Dendritic cell treated with granulocyte-macrophage colony-stimulating factor and Interleukin-4, amounts not matched to agents 40 ng/mL and 50 ng/mL, for 4 days (primary cell): ENCODE measurements at regions of chr2 and their contacts with region 1.

Region 1: GRCh38 chr2:44955593-44956392 is 14.3 kb downstream of the SIX3 start:
- H3K4me3 Mint-ChIP-seq: no peak overlapping the region
- H3K27ac Mint-ChIP-seq: no peak overlapping the region
- H3K4me1 Mint-ChIP-seq: peaks cover 15% of the 10 kb centered on the region
- H3K27me3 Mint-ChIP-seq: peaks cover 78% of the 10 kb centered on the region

Region 2: DNA sequence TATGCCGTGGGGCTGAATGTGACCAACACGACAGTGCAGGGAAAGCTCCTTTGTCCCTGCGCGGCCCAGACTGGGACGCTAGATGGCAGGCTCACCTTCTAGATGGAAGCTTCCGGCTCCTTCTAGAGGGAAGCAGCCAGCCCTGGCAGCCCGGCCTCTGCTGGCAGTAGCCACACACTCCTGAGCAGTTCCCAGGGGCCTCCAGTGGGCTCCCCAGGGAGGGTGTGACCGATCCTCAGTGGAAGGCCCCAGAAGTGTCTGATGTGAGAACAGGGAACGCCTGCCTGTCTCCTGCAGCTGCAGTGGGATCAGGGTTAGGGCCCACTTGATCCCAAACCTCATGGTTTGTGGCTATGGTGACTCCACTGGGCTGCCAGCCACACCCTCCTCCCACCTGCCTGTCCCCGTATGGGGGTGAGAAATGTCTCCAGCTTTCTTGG is 911.5 kb before region 1 on chr2:
- intact Hi-C with region 1: loop called (anchors 10 kb)
- H3K4me3 Mint-ChIP-seq: no peak overlapping the region
- H3K27ac Mint-ChIP-seq: no peak overlapping the region
- H3K4me1 Mint-ChIP-seq: no peaks in the 10 kb centered on the region
- H3K27me3 Mint-ChIP-seq: peaks cover 2% of the 10 kb centered on the region

Region 3: GRCh38 chr2:44244129-44244871 is 711.5 kb before region 1 on chr2:
- intact Hi-C with region 1: loop called (anchors 5 kb)
- H3K4me3 Mint-ChIP-seq: no peak overlapping the region
- H3K27ac Mint-ChIP-seq: no peak overlapping the region
- H3K4me1 Mint-ChIP-seq: peaks cover 7% of the 10 kb centered on the region
- H3K27me3 Mint-ChIP-seq: no peaks in the 10 kb centered on the region

Region 4: GRCh38 chr2:44291281-44292248 is 664.2 kb before region 1 on chr2:
- intact Hi-C with region 1: no loop called
- H3K4me3 Mint-ChIP-seq: no peak overlapping the region
- H3K27ac Mint-ChIP-seq: no peak overlapping the region
- H3K4me1 Mint-ChIP-seq: peaks cover 6% of the 10 kb centered on the region
- H3K27me3 Mint-ChIP-seq: peaks cover 8% of the 10 kb centered on the region

Region 5: DNA sequence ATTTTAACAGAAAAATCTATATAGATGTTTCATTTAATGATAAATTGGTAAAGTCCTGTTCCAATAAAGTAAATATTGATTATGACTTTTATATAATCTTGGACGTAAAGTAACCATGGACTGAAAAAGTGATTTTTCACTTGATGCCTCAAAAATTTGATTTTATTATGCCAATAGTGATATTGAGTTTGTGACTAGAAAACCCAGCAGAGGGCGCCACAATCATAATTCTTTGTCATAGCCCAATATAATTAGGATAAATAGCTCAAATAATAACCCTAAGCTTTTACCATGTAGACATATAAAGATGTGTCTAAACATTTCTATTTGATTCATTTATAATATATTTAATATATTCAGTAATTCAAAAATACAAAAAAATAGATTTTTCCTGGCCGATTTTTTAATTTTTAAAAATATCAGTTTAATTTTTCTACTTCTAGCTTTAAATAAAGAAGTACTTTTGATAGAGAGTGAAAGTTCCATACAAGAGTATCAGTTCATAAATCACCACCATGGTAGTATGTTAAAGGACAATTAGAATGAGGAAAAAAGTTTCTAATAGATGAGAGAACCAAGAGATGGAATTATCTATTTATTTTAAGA is 563.4 kb before region 1 on chr2:
- intact Hi-C with region 1: loop called (anchors 1 kb)
- H3K4me3 Mint-ChIP-seq: no peak overlapping the region
- H3K27ac Mint-ChIP-seq: no peak overlapping the region
- H3K4me1 Mint-ChIP-seq: peaks cover 6% of the 10 kb centered on the region
- H3K27me3 Mint-ChIP-seq: no peaks in the 10 kb centered on the region

Region 6: DNA sequence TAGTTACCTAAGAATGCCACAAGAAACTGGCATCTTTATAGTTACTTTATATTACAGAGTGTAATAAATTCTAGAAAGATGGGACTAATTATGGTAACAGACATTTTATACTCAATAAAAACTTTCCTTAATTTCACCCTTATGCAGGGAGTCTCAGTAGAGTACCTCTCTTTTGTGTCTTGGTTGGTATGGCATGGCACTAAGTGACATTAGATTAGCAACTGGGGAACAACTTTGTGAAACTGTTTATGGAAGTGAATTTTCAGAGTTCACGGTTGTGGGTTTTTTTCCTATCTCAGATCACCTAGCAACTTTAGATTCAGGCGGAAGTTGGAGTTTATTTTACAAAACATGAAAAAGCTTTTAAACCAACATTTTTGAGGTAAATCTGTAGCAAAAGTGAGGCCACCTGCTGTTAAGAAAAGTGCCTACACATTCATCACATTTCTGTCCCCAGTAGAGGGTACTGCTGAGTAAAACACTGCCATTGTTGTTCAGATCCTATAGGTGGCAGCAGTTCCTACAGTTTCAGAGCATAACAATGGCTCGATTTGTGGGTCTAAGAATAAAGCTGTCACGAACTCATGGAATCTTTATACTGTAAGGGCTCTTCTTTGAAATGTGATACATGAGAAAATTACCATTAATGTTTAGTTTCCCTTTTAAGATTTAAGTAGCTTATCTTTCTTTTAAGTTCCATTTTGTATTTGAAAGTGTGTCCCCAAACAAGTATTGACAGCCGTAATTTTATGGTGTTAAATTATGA is 476.5 kb before region 1 on chr2:
- intact Hi-C with region 1: loop called (anchors 1 kb)
- H3K4me3 Mint-ChIP-seq: no peak overlapping the region
- H3K27ac Mint-ChIP-seq: no peak overlapping the region
- H3K4me1 Mint-ChIP-seq: no peaks in the 10 kb centered on the region
- H3K27me3 Mint-ChIP-seq: no peaks in the 10 kb centered on the region

Region 7: GRCh38 chr2:44559108-44559507 is 396.7 kb before region 1 on chr2:
- intact Hi-C with region 1: loop called (anchors 5 kb)
- H3K4me3 Mint-ChIP-seq: no peak overlapping the region
- H3K27ac Mint-ChIP-seq: no peak overlapping the region
- H3K4me1 Mint-ChIP-seq: no peaks in the 10 kb centered on the region
- H3K27me3 Mint-ChIP-seq: no peaks in the 10 kb centered on the region

Region 8: DNA sequence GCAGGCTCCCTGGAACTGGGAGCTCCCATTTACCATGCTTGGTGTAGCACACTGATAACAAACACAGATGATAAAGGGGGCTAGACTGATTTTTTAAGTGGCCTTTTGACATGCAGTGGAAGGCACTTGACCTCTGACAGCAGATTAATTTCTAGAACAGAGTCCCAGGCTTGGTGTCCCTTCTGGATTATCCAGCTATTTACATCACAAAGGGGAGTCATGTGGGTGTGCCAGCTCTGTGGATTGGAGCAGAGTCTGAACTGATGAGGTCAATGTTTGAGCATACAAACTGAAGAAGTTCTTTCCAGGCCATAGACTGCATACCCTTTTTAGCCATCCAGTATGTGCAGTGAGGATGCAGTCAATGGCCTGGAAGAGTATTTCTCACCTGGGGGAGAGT is 85.0 kb after region 1 on chr2:
- intact Hi-C with region 1: no loop called
- H3K4me3 Mint-ChIP-seq: no peak overlapping the region
- H3K27ac Mint-ChIP-seq: no peak overlapping the region
- H3K4me1 Mint-ChIP-seq: no peaks in the 10 kb centered on the region
- H3K27me3 Mint-ChIP-seq: peaks cover 27% of the 10 kb centered on the region